ENCODE measurements at regions of chr12 and their contacts with region 1.

Region 1: GRCh38 chr12:90978117-90978770 is 23.3 kb upstream of the CCER1 start:
- DNase-seq: no peak
- ATAC-seq: peak; percentile 37

Region 2: DNA sequence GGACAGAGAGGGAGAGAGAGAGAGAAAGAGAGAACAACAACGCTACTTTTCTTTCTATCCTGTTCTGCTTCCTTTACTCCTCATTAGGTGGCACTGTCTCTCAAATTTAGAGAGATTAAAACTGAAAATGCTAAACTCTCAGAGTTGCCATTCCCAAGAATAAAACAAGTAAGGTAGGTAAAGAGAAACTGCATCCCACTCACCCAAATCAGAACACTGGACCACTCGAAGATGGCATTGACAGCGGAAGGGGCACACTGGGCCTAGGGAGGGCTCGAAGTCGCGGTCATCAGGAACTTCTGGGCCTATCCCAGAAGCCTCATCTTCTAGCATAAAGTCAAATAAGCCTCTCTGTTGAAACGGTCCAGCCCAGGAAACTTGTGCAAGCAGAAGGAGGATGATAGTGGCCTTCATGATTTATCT is 199.9 kb after region 1 on chr12:
- intact Hi-C with region 1: loop called in 1 of 2 experiments (anchors 5 kb)
- DNase-seq: no peak
- ATAC-seq: peak; percentile 51

Region 3: DNA sequence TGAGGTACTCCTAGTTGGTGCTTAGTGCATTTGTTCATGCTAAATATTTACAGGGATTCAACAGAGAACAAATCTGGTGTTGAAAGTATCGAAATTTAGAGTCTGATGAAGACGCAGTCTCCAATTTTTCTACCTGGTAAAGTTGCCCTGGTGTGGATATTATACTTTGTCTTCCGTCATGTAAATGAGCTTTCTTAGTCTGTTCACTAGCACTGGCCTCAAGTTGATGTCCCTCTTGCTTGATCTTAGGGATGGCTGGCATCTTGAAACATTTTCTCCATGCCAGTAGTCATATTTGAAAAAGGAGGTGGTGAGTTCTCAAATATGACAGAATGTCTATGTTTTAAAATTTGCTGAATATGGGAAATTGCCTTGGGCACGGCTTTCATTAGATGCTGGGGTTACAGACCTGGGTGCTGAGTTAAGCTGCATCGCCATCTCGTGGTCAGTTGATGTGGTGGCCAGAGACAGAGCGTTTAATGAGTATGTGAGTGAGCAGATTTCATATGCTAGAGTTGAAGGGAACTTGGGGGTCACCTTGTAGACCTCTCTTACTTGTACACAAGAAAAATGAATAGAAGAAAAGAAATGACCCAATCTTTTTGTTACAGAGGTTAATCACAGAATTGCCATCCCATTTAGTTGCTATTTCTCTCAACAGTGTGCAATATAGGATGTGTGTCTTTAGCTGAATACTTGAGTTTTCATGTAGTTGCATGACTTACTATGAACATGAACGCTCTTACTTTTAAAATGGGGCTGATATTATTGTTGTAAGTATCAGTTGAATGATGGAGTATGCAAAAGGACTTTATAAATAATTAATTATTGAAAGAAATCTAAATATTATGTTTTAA is 377.1 kb after region 1 on chr12:
- intact Hi-C with region 1: loop called in 1 of 2 experiments (anchors 5 kb)
- DNase-seq: peak; percentile 58 to 75
- ATAC-seq: peak; percentile 72